Heart right ventricle (tissue), 16 donors: ENCODE measurements at regions of chr9 and their contacts with region 1.

Region 1: GRCh38 chr9:68637020-68637419 is 68.0 kb upstream of the PIP5K1B start:
- DNase-seq: no peak
- ATAC-seq: no peak
- H3K4me3 ChIP-seq: no peak overlapping the region
- H3K27ac ChIP-seq: no peak overlapping the region
- H3K4me1 ChIP-seq: peaks cover 0 to 4% (median 0%) of the 10 kb centered on the region in 9 donors
- H3K27me3 ChIP-seq: no peaks in the 10 kb centered on the region
- CTCF ChIP-seq: no peak

Region 2: GRCh38 chr9:68552700-68553476 is 84.1 kb before region 1 on chr9:
- intact Hi-C with region 1: no loop called
- DNase-seq: no peak
- ATAC-seq: peak in 3 of 8 donors; percentile 28 to 53 (median 39)
- H3K4me3 ChIP-seq: no peak overlapping the region
- H3K27ac ChIP-seq: no peak overlapping the region
- H3K4me1 ChIP-seq: peaks cover 0 to 16% (median 0%) of the 10 kb centered on the region in 9 donors
- H3K27me3 ChIP-seq: no peaks in the 10 kb centered on the region
- CTCF ChIP-seq: no peak

Region 3: GRCh38 chr9:68577774-68578591 is 59.0 kb before region 1 on chr9:
- intact Hi-C with region 1: loop called in 1 of 10 experiments (anchors 10 kb)
- DNase-seq: no peak
- ATAC-seq: no peak
- H3K4me3 ChIP-seq: no peak overlapping the region
- H3K27ac ChIP-seq: no peak overlapping the region
- H3K4me1 ChIP-seq: no peaks in the 10 kb centered on the region
- H3K27me3 ChIP-seq: no peaks in the 10 kb centered on the region
- CTCF ChIP-seq: no peak

Region 4: DNA sequence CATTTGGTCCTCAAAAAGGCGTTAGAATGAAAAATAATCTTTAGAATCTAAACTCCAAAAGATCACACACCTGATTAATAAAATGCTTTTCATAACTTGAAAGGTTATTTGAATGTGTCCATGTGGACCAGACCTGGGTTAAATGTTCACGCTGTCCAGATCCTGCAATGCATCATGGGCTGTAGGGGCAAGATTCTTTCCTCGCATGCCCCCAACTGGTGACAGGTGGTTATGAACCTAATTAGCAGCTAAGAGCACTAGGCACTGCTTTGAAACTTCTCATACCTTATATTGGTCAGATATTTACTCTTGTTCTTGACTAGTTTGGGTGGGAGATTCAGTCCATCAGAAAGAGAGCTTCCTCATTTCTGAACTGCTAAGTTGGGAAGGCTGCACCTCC is 48.8 kb after region 1 on chr9:
- intact Hi-C with region 1: loop called in 2 of 10 experiments (anchors 10 kb)
- DNase-seq: no peak
- ATAC-seq: no peak
- H3K4me3 ChIP-seq: no peak overlapping the region
- H3K27ac ChIP-seq: no peak overlapping the region
- H3K4me1 ChIP-seq: peaks cover 0 to 19% (median 10%) of the 10 kb centered on the region in 9 donors
- H3K27me3 ChIP-seq: peaks cover 0 to 12% (median 0%) of the 10 kb centered on the region in 7 donors
- CTCF ChIP-seq: peak in 6 of 9 donors; percentile 12 to 36 (median 26)

Region 5: DNA sequence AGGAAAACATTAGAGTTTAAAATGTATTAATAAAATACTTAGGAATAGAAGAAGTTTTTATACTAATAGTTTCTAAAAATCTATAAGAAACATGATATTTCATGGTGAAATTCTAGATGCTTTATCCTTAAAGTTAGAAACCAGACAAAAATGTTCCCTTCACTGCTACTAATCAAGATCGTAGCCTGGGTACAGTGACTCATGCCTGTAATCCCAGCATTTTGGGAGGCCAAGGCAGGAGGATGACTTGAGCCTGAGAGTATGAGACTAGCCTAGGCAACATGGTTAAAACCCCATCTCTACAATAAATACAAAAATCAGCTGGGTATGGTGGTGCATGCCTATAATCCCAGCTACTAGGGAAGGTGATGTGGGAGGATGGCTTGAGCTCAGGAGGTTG is 1807.9 kb after region 1 on chr9:
- intact Hi-C with region 1: loop called in 1 of 10 experiments (anchors 5 kb)
- DNase-seq: no peak
- ATAC-seq: no peak
- H3K4me3 ChIP-seq: no peak overlapping the region
- H3K27ac ChIP-seq: no peak overlapping the region
- H3K4me1 ChIP-seq: peaks cover 0 to 6% (median 0%) of the 10 kb centered on the region in 9 donors
- H3K27me3 ChIP-seq: no peaks in the 10 kb centered on the region
- CTCF ChIP-seq: no peak